ENCODE measurements at regions of chr15 and their contacts with region 1.

Region 1: DNA sequence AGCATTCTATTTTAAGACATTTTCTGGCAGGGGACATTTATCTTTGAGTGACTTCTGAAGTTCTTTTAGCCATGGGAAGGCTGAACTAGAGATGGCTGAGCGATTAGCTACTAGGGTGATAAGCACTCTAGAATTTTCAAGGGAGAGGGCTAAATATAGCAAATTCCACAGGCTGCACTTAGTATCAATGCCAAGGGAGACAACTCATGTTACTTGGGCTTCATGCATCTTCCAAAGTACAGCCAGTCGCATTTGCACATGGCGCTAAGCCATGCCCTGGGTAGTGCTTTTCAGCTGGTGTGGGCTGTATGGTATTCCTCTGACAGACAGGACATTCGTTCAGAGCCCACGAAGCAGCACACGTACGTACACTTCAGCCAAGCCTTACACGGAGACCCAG is 69.6 kb downstream of the RYR3 start:
- DNase-seq: no peak
- ATAC-seq: no peak
- H3K4me3 ChIP-seq: no peak overlapping the region
- H3K27ac ChIP-seq: no peak overlapping the region
- H3K4me1 ChIP-seq: peaks cover 0 to 3% of the 10 kb centered on the region in 2 donors
- H3K27me3 ChIP-seq: no peaks in the 10 kb centered on the region

Region 2: GRCh38 chr15:33639978-33640377 is 259.6 kb after region 1 on chr15:
- intact Hi-C with region 1: loop called in 1 of 2 experiments (anchors 10 kb)
- DNase-seq: no peak
- ATAC-seq: no peak
- H3K4me3 ChIP-seq: no peak overlapping the region
- H3K27ac ChIP-seq: no peak overlapping the region
- H3K4me1 ChIP-seq: no peaks in the 10 kb centered on the region
- H3K27me3 ChIP-seq: no peaks in the 10 kb centered on the region

Measured in aorta (tissue), 5 donors.